ENCODE measurements at regions of chr5 and their contacts with region 1.

Region 1: GRCh38 chr5:172006321-172007174 is at the start of gene FBXW11:
- DNase-seq: peak; percentile 87 to 98 (median 94)
- ATAC-seq: peak; percentile 87
- H3K4me3 ChIP-seq: peak within 1 kb of the TSS; percentile 78 to 96
- H3K4me3 Mint-ChIP-seq: peak within 1 kb of the TSS; percentile 95
- H3K27ac ChIP-seq: peak within 1 kb of the TSS; percentile 96 to 99
- H3K27ac Mint-ChIP-seq: peak within 1 kb of the TSS; percentile 98
- H3K4me1 ChIP-seq: peaks cover 35% of the 10 kb centered on the region
- H3K4me1 Mint-ChIP-seq: peaks cover 48% of the 10 kb centered on the region
- H3K27me3 ChIP-seq: no peaks in the 10 kb centered on the region
- H3K27me3 Mint-ChIP-seq: no peaks in the 10 kb centered on the region
- CTCF ChIP-seq: no peak
- total RNA-seq, gene FBXW11: 28.8 to 32.6 TPM

Region 2: DNA sequence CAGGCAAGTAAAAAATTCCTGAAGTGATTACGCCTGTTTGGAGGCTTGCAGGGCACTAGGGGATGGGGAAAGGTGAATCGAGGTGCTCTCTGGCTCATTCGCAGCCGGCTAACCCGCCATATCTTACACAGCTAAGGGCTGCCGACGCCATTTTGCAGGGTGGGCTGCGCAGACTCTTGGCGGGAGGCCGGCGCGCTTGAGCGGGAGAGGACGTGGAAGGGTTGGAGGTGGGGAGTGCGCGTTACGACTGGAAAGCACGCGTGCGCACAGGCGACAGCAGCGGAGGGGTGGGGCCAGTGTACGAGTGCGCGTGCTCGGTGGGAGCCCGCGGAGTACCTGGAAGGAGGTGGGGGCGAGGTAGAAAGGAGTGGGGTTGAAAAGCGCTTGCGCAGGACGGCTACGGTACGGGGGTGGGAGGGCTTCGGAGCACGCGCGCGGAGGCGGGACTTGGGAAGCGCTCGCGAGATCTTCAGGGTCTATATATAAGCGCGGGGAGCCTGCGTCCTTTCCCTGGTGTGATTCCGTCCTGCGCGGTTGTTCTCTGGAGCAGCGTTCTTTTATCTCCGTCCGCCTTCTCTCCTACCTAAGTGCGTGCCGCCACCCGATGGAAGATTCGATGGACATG is 619.1 kb before region 1 on chr5 and contains the start of gene NPM1:
- CTCF ChIA-PET with region 1: no interaction called
- POLR2A ChIA-PET with region 1: interaction called, 24 read pairs
- intact Hi-C with region 1: loop called (anchors 1 to 2 kb)
- DNase-seq: peak; percentile 95 to 100 (median 97)
- ATAC-seq: peak; percentile 88
- H3K4me3 ChIP-seq: peak within 1 kb of the TSS; percentile 92 to 96
- H3K4me3 Mint-ChIP-seq: peak within 1 kb of the TSS; percentile 96
- H3K27ac ChIP-seq: peak within 1 kb of the TSS; percentile 94 to 97
- H3K27ac Mint-ChIP-seq: peak within 1 kb of the TSS; percentile 99
- H3K4me1 ChIP-seq: peaks cover 45% of the 10 kb centered on the region
- H3K4me1 Mint-ChIP-seq: peaks cover 46% of the 10 kb centered on the region
- H3K27me3 ChIP-seq: no peaks in the 10 kb centered on the region
- H3K27me3 Mint-ChIP-seq: peaks cover 3% of the 10 kb centered on the region
- CTCF ChIP-seq: no peak
- total RNA-seq, gene NPM1: 1,297 to 1,299 TPM

Region 3: DNA sequence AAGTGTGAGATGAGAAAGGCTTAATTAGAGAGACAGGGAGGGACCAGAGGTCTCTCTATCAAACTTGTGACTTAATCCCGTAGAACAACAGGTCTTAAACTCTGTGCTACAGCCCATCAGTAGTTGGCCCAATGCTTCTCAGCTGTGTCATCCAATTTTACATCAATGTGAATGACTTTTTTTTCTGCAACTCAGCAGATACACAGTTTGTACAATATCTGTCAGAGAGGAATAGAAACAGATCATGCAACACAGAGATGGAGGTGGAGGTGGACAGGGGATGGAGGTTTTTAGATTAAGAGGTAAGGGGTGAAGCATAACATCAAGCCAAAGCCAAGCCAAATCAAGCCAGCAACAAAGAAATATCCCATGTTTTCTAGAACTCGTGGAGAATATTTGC is 43.1 kb before region 1 on chr5:
- CTCF ChIA-PET with region 1: interaction called, 7 read pairs
- POLR2A ChIA-PET with region 1: interaction called, 11 read pairs
- intact Hi-C with region 1: loop called in 1 of 2 experiments (anchors 5 kb)
- DNase-seq: no peak
- ATAC-seq: no peak
- H3K4me3 ChIP-seq: no peak overlapping the region
- H3K4me3 Mint-ChIP-seq: no peak overlapping the region
- H3K27ac ChIP-seq: no peak overlapping the region
- H3K27ac Mint-ChIP-seq: no peak overlapping the region
- H3K4me1 ChIP-seq: peaks cover 33% of the 10 kb centered on the region
- H3K4me1 Mint-ChIP-seq: peaks cover 68% of the 10 kb centered on the region
- H3K27me3 ChIP-seq: no peaks in the 10 kb centered on the region
- H3K27me3 Mint-ChIP-seq: no peaks in the 10 kb centered on the region
- CTCF ChIP-seq: no peak

Region 4: GRCh38 chr5:172071289-172071875 is 64.8 kb after region 1 on chr5:
- CTCF ChIA-PET with region 1: no interaction called
- POLR2A ChIA-PET with region 1: interaction called, 12 read pairs
- intact Hi-C with region 1: loop called in 1 of 2 experiments (anchors 2 kb)
- DNase-seq: peak in 2 of 9 experiments; percentile 23 to 55
- ATAC-seq: no peak
- H3K4me3 ChIP-seq: no peak overlapping the region
- H3K4me3 Mint-ChIP-seq: no peak overlapping the region
- H3K27ac ChIP-seq: peak overlapping the region in 1 of 2 experiments; percentile 4
- H3K27ac Mint-ChIP-seq: peak overlapping the region; percentile 78
- H3K4me1 ChIP-seq: peaks cover 45% of the 10 kb centered on the region
- H3K4me1 Mint-ChIP-seq: peaks cover 54% of the 10 kb centered on the region
- H3K27me3 ChIP-seq: no peaks in the 10 kb centered on the region
- H3K27me3 Mint-ChIP-seq: no peaks in the 10 kb centered on the region
- CTCF ChIP-seq: no peak

Region 5: DNA sequence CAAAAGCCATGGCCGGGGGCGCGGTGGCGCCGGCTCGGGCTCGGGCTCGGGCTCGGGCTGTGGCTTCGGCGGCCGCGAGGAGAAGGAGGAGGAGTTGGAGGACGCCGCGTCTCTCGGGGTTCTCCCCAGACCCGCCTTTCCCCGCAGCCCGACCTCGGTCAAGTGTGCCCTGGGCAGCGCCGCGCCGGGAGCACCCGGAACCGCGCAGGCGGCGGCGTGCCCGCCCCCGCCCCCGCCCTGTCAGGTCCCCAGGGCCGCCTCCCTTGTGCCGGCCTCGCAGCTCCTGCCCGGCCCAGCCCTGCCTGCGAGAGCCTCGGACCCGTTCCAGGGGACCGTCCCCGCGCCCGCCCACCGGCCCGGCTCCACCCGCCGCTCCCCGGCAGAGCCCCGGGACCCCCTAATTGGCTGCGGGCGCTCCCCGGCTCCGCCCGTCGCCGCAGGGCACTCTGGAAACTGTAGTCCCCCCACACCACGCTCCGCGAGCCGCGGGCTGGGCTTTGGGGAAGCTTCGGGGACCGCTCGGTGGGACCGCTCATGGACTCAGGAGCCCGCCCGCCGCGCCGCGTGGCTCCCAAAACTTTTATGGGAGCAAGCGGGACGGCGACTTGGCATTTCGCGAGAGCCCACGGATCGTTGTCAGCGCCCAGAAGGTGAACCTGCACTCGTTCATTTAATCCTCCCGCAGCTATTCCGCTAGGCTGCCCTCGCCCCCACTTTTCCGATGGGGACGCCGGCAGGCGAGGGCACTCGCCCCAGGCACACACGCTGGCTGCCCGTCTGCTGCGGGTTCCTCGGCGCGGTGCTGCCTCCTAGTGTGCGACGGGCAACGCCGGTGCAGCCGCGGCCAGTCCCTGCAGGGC is 181.7 kb after region 1 on chr5 and contains the start of gene STK10:
- CTCF ChIA-PET with region 1: interaction called, 12 read pairs
- POLR2A ChIA-PET with region 1: interaction called, 9 read pairs
- intact Hi-C with region 1: loop called (anchors 1 to 2 kb)
- DNase-seq: peak; percentile 79 to 95 (median 89)
- ATAC-seq: peak; percentile 75
- H3K4me3 ChIP-seq: peak within 1 kb of the TSS; percentile 74 to 95
- H3K4me3 Mint-ChIP-seq: peak within 1 kb of the TSS; percentile 100
- H3K27ac ChIP-seq: peak within 1 kb of the TSS; percentile 84 to 97
- H3K27ac Mint-ChIP-seq: peak within 1 kb of the TSS; percentile 99
- H3K4me1 ChIP-seq: peaks cover 14% of the 10 kb centered on the region
- H3K4me1 Mint-ChIP-seq: peaks cover 32% of the 10 kb centered on the region
- H3K27me3 ChIP-seq: no peaks in the 10 kb centered on the region
- H3K27me3 Mint-ChIP-seq: no peaks in the 10 kb centered on the region
- CTCF ChIP-seq: peak; percentile 97
- total RNA-seq, gene STK10: 172 to 182 TPM

Region 6: DNA sequence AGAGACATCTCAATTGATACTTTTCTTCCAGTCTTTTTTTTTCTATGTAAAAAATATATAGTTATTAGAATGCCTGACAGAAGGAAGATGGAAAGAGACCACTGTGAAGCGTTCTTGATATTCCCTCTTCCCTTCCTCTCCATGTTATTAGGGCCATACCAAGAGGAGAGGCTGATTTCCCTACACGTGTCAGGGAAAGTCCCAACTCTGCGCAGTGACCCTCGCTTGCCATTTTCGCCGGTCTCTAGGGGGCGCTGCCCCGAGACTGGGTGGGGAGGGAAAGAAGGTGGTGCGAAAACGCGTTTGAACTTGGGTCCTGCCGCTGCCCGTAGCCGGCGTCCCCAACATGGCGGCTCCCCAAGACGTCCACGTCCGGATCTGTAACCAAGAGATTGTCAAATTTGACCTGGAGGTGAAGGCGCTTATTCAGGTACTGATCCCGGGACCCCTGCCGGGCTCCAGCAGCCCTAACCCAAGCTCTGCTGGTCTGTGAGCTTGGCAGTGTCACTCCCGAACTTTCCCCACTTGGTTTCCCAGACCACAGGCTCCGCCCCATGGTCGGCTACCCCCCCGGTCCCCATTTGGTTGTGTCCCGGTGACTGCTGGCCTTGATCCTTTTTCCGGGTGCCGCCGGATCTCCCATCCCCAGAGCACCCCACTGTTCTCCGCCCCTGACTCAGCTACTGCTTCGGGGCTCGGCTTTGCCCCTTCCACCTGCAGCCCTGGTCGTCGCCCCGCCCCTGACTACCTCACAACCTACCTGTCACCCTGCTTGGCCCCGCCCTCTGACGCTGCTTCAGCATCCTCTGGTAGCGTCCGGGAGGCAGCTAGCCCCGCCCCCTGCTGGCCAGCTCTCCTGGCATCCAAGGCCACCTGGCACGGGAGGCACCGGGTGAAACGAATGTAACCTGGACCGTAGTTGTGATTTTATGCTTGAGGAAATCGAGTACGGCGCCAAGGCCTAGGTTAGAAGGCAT is 1137.9 kb after region 1 on chr5 and contains the start of gene BNIP1:
- CTCF ChIA-PET with region 1: no interaction called
- POLR2A ChIA-PET with region 1: interaction called, 5 read pairs
- intact Hi-C with region 1: loop called in 1 of 2 experiments (anchors 10 kb)
- DNase-seq: peak; percentile 91 to 98 (median 97)
- ATAC-seq: peak; percentile 94
- H3K4me3 ChIP-seq: peak within 1 kb of the TSS; percentile 74 to 99
- H3K4me3 Mint-ChIP-seq: peak within 1 kb of the TSS; percentile 99
- H3K27ac ChIP-seq: peak within 1 kb of the TSS; percentile 95 to 98
- H3K27ac Mint-ChIP-seq: peak within 1 kb of the TSS; percentile 99
- H3K4me1 ChIP-seq: peaks cover 10% of the 10 kb centered on the region
- H3K4me1 Mint-ChIP-seq: peaks cover 11% of the 10 kb centered on the region
- H3K27me3 ChIP-seq: no peaks in the 10 kb centered on the region
- H3K27me3 Mint-ChIP-seq: no peaks in the 10 kb centered on the region
- CTCF ChIP-seq: peak; percentile 68
- total RNA-seq, gene BNIP1: 22.7 to 24.0 TPM